B cell (primary cell): ENCODE measurements at regions of chr1 and their contacts with region 1.

Region 1: GRCh38 chr1:194295685-194296084 is 1109.3 kb upstream of the B3GALT2 start:
- DNase-seq: peak; percentile 77
- ATAC-seq: peak; percentile 93
- H3K4me3 ChIP-seq: no peak overlapping the region
- H3K4me3 Mint-ChIP-seq: no peak overlapping the region
- H3K27ac ChIP-seq: no peak overlapping the region
- H3K27ac Mint-ChIP-seq: no peak overlapping the region
- H3K4me1 ChIP-seq: no peaks in the 10 kb centered on the region
- H3K4me1 Mint-ChIP-seq: peaks cover 9% of the 10 kb centered on the region
- H3K27me3 ChIP-seq: peaks cover 0 to 9% (median 5%) of the 10 kb centered on the region in 4 experiments
- H3K27me3 Mint-ChIP-seq: peaks cover 21% of the 10 kb centered on the region
- CTCF ChIP-seq: peak; percentile 84

Region 2: DNA sequence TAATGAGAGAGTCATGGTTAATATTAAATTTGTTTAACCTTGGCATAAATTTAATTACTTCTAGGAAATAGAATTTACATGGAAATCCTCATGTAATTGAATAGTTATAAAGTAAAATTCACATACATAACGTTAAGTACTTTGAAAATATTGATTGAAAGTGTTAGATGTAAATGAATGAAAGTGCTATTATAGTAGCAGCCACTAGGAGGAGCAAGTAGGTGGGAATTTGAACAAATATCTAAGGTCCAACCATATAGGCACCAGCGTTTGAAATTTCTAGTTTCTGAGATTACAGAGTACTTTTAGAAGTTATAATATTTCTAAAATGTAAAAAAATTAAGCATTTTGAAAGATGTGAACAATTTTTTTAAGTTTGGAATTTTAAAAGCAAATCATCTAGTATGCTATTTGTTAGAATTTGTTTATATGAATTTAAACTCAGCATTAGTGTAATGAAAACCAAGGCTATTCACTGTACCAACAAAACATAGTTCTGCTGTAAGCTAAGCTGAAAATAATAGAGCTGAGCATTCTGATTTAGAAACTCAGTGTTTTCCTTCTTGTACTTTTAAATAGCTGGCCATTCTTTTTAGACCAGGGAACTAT is 1112.6 kb before region 1 on chr1:
- CTCF ChIA-PET with region 1: interaction called, 5 read pairs
- POLR2A ChIA-PET with region 1: no interaction called
- intact Hi-C with region 1: loop called (anchors 1 kb)
- DNase-seq: peak; percentile 64
- ATAC-seq: peak; percentile 54
- H3K4me3 ChIP-seq: no peak overlapping the region
- H3K4me3 Mint-ChIP-seq: no peak overlapping the region
- H3K27ac ChIP-seq: no peak overlapping the region
- H3K27ac Mint-ChIP-seq: no peak overlapping the region
- H3K4me1 ChIP-seq: peaks cover 4 to 13% of the 10 kb centered on the region in 2 donors
- H3K4me1 Mint-ChIP-seq: peaks cover 20% of the 10 kb centered on the region
- H3K27me3 ChIP-seq: no peaks in the 10 kb centered on the region
- H3K27me3 Mint-ChIP-seq: no peaks in the 10 kb centered on the region
- CTCF ChIP-seq: peak; percentile 99

Region 3: GRCh38 chr1:193256019-193256418 is 1039.7 kb before region 1 on chr1:
- CTCF ChIA-PET with region 1: no interaction called
- POLR2A ChIA-PET with region 1: no interaction called
- intact Hi-C with region 1: loop called (anchors 10 kb)
- DNase-seq: no peak
- ATAC-seq: no peak
- H3K4me3 ChIP-seq: no peak overlapping the region
- H3K4me3 Mint-ChIP-seq: no peak overlapping the region
- H3K27ac ChIP-seq: no peak overlapping the region
- H3K27ac Mint-ChIP-seq: no peak overlapping the region
- H3K4me1 ChIP-seq: no peaks in the 10 kb centered on the region
- H3K4me1 Mint-ChIP-seq: no peaks in the 10 kb centered on the region
- H3K27me3 ChIP-seq: no peaks in the 10 kb centered on the region
- H3K27me3 Mint-ChIP-seq: no peaks in the 10 kb centered on the region
- CTCF ChIP-seq: no peak

Region 4: DNA sequence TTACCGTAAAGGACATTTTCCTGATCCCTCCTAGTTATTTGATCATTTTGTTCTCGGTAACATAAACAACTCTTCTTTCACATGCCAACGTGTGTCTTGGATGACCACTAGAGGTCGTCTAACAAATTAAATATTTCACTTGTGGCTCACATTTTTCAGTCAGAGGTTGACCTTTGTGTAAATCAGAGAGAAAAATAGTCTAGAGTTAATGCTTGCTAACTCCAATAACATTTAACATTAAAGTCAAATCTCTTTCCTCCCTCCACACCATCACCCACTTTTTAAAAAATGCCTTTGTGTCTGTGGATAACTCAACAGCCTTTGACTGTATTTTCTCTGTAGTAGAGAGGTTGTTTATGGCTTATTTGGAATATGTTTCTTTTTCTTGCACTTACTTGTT is 888.8 kb before region 1 on chr1:
- CTCF ChIA-PET with region 1: interaction called, 3 read pairs
- POLR2A ChIA-PET with region 1: no interaction called
- intact Hi-C with region 1: loop called (anchors 1 kb)
- DNase-seq: peak; percentile 62
- ATAC-seq: peak; percentile 53
- H3K4me3 ChIP-seq: no peak overlapping the region
- H3K4me3 Mint-ChIP-seq: no peak overlapping the region
- H3K27ac ChIP-seq: no peak overlapping the region
- H3K27ac Mint-ChIP-seq: no peak overlapping the region
- H3K4me1 ChIP-seq: peaks cover 0 to 6% of the 10 kb centered on the region in 2 donors
- H3K4me1 Mint-ChIP-seq: peaks cover 5% of the 10 kb centered on the region
- H3K27me3 ChIP-seq: no peaks in the 10 kb centered on the region
- H3K27me3 Mint-ChIP-seq: no peaks in the 10 kb centered on the region
- CTCF ChIP-seq: peak; percentile 85

Region 5: DNA sequence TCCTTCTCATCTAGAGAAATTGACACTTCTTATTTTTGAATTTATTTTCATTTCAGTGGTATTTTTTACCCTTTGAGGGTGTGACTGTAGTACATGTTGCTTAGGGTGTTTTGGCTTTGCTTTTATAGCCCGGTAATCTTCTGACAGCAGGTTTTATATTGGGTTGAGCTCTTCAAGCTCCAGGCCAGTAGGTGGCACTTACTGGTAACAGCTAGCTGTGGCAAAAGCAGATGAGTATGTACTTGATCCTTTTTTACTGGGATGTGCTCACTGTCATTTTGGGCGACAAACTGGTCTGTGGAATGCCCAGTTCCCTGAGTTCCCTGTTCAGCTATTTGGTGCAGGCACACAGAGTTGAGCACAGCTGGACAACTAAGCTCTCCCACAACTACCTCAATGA is 193.1 kb before region 1 on chr1:
- CTCF ChIA-PET with region 1: interaction called, 3 read pairs
- POLR2A ChIA-PET with region 1: no interaction called
- intact Hi-C with region 1: loop called (anchors 2 kb)
- DNase-seq: no peak
- ATAC-seq: no peak
- H3K4me3 ChIP-seq: no peak overlapping the region
- H3K4me3 Mint-ChIP-seq: no peak overlapping the region
- H3K27ac ChIP-seq: no peak overlapping the region
- H3K27ac Mint-ChIP-seq: no peak overlapping the region
- H3K4me1 ChIP-seq: no peaks in the 10 kb centered on the region
- H3K4me1 Mint-ChIP-seq: no peaks in the 10 kb centered on the region
- H3K27me3 ChIP-seq: peaks cover 0 to 3% (median 0%) of the 10 kb centered on the region in 4 experiments
- H3K27me3 Mint-ChIP-seq: no peaks in the 10 kb centered on the region
- CTCF ChIP-seq: no peak

Region 6: GRCh38 chr1:194159940-194160339 is 135.7 kb before region 1 on chr1:
- CTCF ChIA-PET with region 1: no interaction called
- POLR2A ChIA-PET with region 1: no interaction called
- intact Hi-C with region 1: loop called (anchors 10 kb)
- DNase-seq: no peak
- ATAC-seq: no peak
- H3K4me3 ChIP-seq: no peak overlapping the region
- H3K4me3 Mint-ChIP-seq: no peak overlapping the region
- H3K27ac ChIP-seq: no peak overlapping the region
- H3K27ac Mint-ChIP-seq: no peak overlapping the region
- H3K4me1 ChIP-seq: no peaks in the 10 kb centered on the region
- H3K4me1 Mint-ChIP-seq: no peaks in the 10 kb centered on the region
- H3K27me3 ChIP-seq: no peaks in the 10 kb centered on the region
- H3K27me3 Mint-ChIP-seq: no peaks in the 10 kb centered on the region
- CTCF ChIP-seq: no peak